CD14-positive monocyte (primary cell): ENCODE measurements at regions of chr12 and their contacts with region 1.

Region 1: DNA sequence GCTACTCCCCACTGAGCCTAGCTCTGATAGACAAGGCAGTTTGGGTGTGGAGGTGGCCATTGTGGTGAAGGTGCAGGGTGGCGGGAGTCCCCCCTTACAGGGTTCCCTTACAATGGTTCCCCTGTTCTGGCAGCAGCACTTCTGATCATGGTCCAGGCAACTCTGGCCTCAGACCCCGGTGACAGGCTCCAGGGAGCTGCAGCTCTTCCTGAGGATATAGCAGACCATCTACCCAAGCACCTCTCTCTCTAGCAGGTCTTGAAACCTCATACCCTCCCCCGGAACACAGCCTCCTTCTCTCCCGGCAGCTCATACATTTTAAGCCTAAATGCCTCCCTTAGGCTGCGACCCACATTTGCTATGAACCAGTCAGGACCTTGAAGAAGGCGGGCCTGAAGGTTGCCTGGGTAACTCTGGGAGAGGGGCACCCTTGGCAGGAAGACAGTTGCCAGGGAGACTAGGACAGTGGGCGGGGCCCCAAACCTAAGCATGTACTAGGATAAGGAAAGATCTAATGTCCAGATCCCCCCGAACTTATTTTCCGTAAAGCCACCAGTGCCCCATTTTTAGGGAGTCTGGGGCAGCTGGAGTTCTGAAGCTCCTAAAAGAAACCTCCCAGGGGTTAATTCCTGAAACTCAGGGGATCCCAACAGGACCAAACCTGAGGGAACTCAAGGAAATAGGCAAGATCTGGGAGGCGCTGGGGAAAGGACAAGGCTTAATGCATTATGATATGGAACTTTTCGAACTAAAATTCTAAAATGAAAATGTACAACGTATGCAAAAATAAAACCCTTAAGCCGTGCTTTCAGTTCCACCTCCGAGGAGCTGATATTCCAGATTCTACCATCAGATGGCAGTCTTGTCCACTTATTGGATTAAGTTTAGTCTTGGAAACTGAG is 4.5 kb upstream of the GDF11 start:
- DNase-seq: peak; percentile 64 to 82 (median 66)
- H3K4me3 ChIP-seq: peak overlapping the region; percentile 57 to 95 (median 82)
- H3K4me3 Mint-ChIP-seq: peak overlapping the region; percentile 85 to 92
- H3K27ac ChIP-seq: peak overlapping the region; percentile 33 to 65
- H3K27ac Mint-ChIP-seq: peak overlapping the region; percentile 70 to 90 (median 80)
- H3K4me1 ChIP-seq: peaks cover 16 to 24% of the 10 kb centered on the region in 2 donors
- H3K4me1 Mint-ChIP-seq: peaks cover 30% of the 10 kb centered on the region
- H3K27me3 ChIP-seq: peaks cover 9 to 12% of the 10 kb centered on the region in 2 donors
- H3K27me3 Mint-ChIP-seq: peaks cover 20 to 24% (median 22%) of the 10 kb centered on the region in 3 donors
- CTCF ChIP-seq: peak; percentile 90

Region 2: DNA sequence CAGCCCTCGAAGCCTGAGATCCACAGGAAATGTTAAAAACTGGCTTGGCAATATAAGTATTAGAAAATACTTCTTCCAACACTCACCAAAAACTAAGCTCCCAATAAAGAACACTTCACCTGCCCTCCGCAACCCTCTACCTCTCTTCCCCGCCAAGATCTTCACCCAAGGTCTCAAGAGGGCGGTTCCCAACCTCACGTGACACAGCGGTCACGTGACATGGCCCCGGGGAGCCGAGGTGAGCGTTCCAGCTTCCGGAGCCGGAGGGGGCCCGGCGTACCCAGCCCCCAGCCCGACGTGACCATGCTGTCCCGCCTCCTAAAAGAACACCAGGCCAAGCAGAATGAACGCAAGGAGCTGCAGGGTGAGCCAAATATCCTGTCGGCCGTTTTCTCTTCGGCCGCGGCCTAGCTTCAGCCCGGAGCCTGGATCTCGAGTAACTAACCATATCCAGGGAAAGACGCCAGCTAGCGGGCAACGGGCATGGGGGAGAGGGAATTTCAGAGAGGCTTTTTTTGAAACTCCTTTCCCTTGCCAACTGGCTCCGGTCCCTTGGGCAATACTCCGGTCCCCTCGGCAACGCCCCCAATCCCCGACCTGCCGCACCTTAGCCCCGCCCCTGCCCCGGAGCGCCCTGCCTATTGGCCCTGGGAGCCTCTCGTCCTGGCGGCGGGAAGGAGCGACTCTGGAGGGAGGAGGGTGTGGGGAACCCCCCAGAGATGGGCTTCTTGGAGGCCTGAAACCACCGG is 22.4 kb before region 1 on chr12 and contains the start of gene BLOC1S1:
- intact Hi-C with region 1: no loop called
- DNase-seq: peak; percentile 73 to 79 (median 77)
- H3K4me3 ChIP-seq: peak within 1 kb of the TSS; percentile 70 to 93 (median 76)
- H3K4me3 Mint-ChIP-seq: peak within 1 kb of the TSS; percentile 88 to 94
- H3K27ac ChIP-seq: peak within 1 kb of the TSS; percentile 84 to 92
- H3K27ac Mint-ChIP-seq: peak within 1 kb of the TSS; percentile 87 to 97 (median 93)
- H3K4me1 ChIP-seq: peaks cover 26 to 49% of the 10 kb centered on the region in 2 donors
- H3K4me1 Mint-ChIP-seq: peaks cover 50% of the 10 kb centered on the region
- H3K27me3 ChIP-seq: peaks cover 0 to 20% of the 10 kb centered on the region in 2 donors
- H3K27me3 Mint-ChIP-seq: peaks cover 11 to 21% (median 19%) of the 10 kb centered on the region in 3 donors
- CTCF ChIP-seq: no peak
- polyA plus RNA-seq, gene BLOC1S1: 222 to 358 (median 223) TPM

Region 3: DNA sequence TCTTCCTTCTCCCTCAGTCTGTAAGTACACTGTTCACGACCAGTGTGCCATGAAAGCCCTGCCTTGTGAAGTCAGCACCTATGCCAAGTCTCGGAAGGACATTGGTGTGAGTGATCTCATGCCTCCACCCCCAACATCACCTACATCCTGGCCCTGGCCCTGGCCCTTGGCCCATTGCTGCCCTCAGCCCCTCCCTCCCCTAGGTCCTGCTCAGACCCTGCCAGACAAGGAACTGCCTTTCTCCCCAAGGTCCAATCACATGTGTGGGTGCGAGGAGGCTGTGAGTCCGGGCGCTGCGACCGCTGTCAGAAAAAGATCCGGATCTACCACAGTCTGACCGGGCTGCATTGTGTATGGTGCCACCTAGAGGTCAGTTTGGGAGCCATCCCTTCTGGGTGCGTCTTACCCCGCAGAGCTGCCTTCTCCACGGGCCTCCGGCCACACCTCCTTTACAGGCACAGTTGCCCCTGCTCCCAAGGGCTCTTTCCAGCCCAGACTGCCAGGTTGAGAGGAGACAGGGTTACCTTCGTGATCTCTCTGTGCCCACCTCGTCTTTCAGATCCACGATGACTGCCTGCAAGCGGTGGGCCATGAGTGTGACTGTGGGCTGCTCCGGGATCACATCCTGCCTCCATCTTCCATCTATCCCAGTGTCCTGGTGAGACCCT is 201.8 kb after region 1 on chr12:
- intact Hi-C with region 1: loop called in 1 of 2 experiments (anchors 2 kb)
- DNase-seq: peak; percentile 78 to 81 (median 81)
- H3K4me3 ChIP-seq: no peak overlapping the region
- H3K4me3 Mint-ChIP-seq: no peak overlapping the region
- H3K27ac ChIP-seq: no peak overlapping the region
- H3K27ac Mint-ChIP-seq: peak overlapping the region in 4 of 7 donors; percentile 69 to 77 (median 72)
- H3K4me1 ChIP-seq: peaks cover 6 to 8% of the 10 kb centered on the region in 2 donors
- H3K4me1 Mint-ChIP-seq: peaks cover 15% of the 10 kb centered on the region
- H3K27me3 ChIP-seq: no peaks in the 10 kb centered on the region
- H3K27me3 Mint-ChIP-seq: peaks cover 0 to 1% (median 0%) of the 10 kb centered on the region in 3 donors
- CTCF ChIP-seq: peak; percentile 86

Region 4: GRCh38 chr12:56029666-56030293 is 291.4 kb after region 1 on chr12:
- intact Hi-C with region 1: loop called in 1 of 2 experiments (anchors 10 kb)
- DNase-seq: peak; percentile 26 to 44 (median 42)
- H3K4me3 ChIP-seq: no peak overlapping the region
- H3K4me3 Mint-ChIP-seq: no peak overlapping the region
- H3K27ac ChIP-seq: no peak overlapping the region
- H3K27ac Mint-ChIP-seq: no peak overlapping the region
- H3K4me1 ChIP-seq: no peaks in the 10 kb centered on the region
- H3K4me1 Mint-ChIP-seq: no peaks in the 10 kb centered on the region
- H3K27me3 ChIP-seq: no peaks in the 10 kb centered on the region
- H3K27me3 Mint-ChIP-seq: peaks cover 0 to 6% (median 0%) of the 10 kb centered on the region in 3 donors
- CTCF ChIP-seq: peak; percentile 70